Heart left ventricle (tissue), 16 donors: ENCODE measurements at regions of chr10 and their contacts with region 1.

Region 1: DNA sequence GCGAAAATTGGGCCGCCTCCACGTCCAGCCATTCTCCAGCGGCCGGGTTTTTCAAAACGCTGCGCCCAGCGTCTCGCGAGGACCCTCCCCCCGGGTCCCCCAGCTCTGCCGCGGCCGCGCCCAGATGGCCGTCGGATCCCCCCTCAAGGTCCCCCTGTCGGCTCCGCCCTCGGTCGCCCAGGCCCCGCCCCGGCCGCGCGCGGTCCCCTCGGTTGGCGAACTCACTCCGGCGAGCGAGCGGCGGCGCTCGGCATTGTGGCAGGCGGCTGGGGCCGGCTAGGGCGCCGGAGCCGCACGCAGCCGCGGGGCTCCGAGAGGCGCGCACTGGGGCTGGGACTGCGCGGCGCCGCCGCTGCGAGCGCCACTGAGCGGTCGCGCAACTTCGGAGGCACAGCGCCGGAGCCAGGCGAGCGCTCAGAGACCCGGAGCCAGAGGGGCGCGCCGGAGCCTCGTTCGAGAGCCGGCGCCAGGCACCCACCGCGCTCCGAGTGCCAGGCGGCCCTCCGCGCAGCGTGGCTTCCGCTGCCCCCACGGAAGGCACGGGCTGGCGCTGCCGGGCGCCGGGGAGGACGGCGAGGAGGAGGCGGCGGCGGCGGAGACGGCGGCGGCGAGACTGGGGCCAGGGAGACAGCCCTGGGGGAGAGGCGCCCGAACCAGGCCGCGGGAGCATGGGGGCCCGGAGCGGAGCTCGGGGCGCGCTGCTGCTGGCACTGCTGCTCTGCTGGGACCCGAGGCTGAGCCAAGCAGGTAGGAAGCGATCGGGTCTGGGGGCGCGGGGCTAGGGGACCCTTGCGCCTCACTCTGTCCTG is at the start of gene UNC5B:
- DNase-seq: peak; percentile 93 to 96 (median 94)
- ATAC-seq: peak; percentile 72 to 93 (median 86)
- H3K4me3 ChIP-seq: peak within 1 kb of the TSS; percentile 63 to 98 (median 84)
- H3K27ac ChIP-seq: peak within 1 kb of the TSS; percentile 78 to 96 (median 91)
- H3K4me1 ChIP-seq: peaks cover 0 to 59% (median 38%) of the 10 kb centered on the region in 12 donors
- H3K27me3 ChIP-seq: peaks cover 0 to 48% (median 0%) of the 10 kb centered on the region in 9 donors
- CTCF ChIP-seq: peak in 11 of 12 donors; percentile 8 to 64 (median 48)
- POLR2A ChIP-seq: peak; percentile 45 to 95
- total RNA-seq, gene UNC5B: 6.9 to 22.8 (median 10.9) TPM

Region 2: GRCh38 chr10:70903262-70903921 is 309.1 kb before region 1 on chr10:
- intact Hi-C with region 1: loop called in 3 of 10 experiments (anchors 5 to 10 kb)
- DNase-seq: peak in 4 of 5 donors; percentile 68 to 79 (median 70)
- ATAC-seq: peak; percentile 61 to 72 (median 64)
- H3K4me3 ChIP-seq: no peak overlapping the region
- H3K27ac ChIP-seq: no peak overlapping the region
- H3K4me1 ChIP-seq: peaks cover 0 to 24% (median 9%) of the 10 kb centered on the region in 12 donors
- H3K27me3 ChIP-seq: no peaks in the 10 kb centered on the region
- CTCF ChIP-seq: peak; percentile 84 to 95 (median 91)
- POLR2A ChIP-seq: no peak

Region 3: GRCh38 chr10:71009126-71009525 is 203.4 kb before region 1 on chr10:
- intact Hi-C with region 1: loop called in 4 of 10 experiments (anchors 5 to 10 kb)
- DNase-seq: peak in 1 of 5 donors; percentile 35
- ATAC-seq: peak in 1 of 4 donors; percentile 51
- H3K4me3 ChIP-seq: no peak overlapping the region
- H3K27ac ChIP-seq: no peak overlapping the region
- H3K4me1 ChIP-seq: peaks cover 0 to 18% (median 2%) of the 10 kb centered on the region in 12 donors
- H3K27me3 ChIP-seq: peaks cover 0 to 8% (median 0%) of the 10 kb centered on the region in 9 donors
- CTCF ChIP-seq: no peak
- POLR2A ChIP-seq: no peak

Region 4: GRCh38 chr10:71068861-71069271 is 143.7 kb before region 1 on chr10:
- intact Hi-C with region 1: loop called in 3 of 10 experiments (anchors 5 to 10 kb)
- DNase-seq: peak; percentile 65 to 85 (median 83)
- ATAC-seq: peak; percentile 69 to 83 (median 71)
- H3K4me3 ChIP-seq: no peak overlapping the region
- H3K27ac ChIP-seq: peak overlapping the region in 11 of 12 donors; percentile 7 to 84 (median 74)
- H3K4me1 ChIP-seq: peaks cover 0 to 50% (median 15%) of the 10 kb centered on the region in 12 donors
- H3K27me3 ChIP-seq: no peaks in the 10 kb centered on the region
- CTCF ChIP-seq: no peak
- POLR2A ChIP-seq: no peak

Region 5: DNA sequence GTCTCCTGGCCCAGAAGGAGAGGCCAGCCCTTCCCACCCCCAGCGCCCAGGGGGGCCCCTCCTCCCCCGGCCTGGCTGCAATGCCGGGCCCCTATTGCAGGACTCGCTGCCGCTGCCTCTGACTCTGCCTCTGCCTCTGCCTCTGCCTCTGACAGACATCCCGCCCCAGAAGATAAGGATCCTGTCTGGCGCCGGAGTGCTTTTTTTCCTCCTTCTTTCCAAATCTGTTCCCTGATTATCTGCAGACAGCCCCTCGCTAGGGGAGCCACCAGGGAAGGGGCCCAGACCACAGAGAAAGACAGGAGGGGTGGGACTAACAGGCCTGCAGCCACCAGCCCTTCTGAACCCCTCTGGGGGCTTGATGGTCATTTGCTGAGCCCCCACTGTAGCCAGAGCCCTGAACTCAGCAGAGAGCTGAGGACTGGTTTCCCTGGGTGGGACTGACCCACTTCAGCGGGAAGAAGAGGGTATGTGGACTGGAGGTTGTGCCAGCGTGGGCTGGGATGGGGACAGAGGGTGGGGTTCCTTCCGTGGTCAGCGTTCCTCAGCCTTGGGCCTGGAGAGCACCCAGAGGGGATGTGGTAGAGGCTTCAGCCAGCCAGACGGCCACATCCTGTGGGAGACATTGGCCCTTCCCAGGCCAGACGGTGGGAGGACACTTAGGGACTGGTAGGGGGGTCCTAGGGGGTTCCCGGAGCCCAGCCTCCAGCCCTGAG is 22.6 kb after region 1 on chr10:
- intact Hi-C with region 1: loop called in 2 of 10 experiments (anchors 1 kb)
- DNase-seq: peak; percentile 82 to 88 (median 84)
- ATAC-seq: peak; percentile 66 to 77 (median 74)
- H3K4me3 ChIP-seq: peak overlapping the region in 5 of 12 donors; percentile 0 to 27 (median 21)
- H3K27ac ChIP-seq: peak overlapping the region in 11 of 12 donors; percentile 35 to 89 (median 64)
- H3K4me1 ChIP-seq: peaks cover 14 to 100% (median 71%) of the 10 kb centered on the region in 12 donors
- H3K27me3 ChIP-seq: no peaks in the 10 kb centered on the region
- CTCF ChIP-seq: no peak
- POLR2A ChIP-seq: no peak

Region 6: GRCh38 chr10:71260622-71261325 is 48.3 kb after region 1 on chr10:
- intact Hi-C with region 1: loop called in 3 of 10 experiments (anchors 5 kb)
- DNase-seq: peak in 4 of 5 donors; percentile 62 to 83 (median 74)
- ATAC-seq: peak; percentile 42 to 73 (median 60)
- H3K4me3 ChIP-seq: peak overlapping the region in 2 of 12 donors; percentile 6 to 21
- H3K27ac ChIP-seq: peak overlapping the region; percentile 15 to 90 (median 80)
- H3K4me1 ChIP-seq: peaks cover 15 to 98% (median 81%) of the 10 kb centered on the region in 12 donors
- H3K27me3 ChIP-seq: no peaks in the 10 kb centered on the region
- CTCF ChIP-seq: peak in 1 of 12 donors; percentile 7
- POLR2A ChIP-seq: no peak

Region 7: GRCh38 chr10:71285180-71285545 is 72.6 kb after region 1 on chr10:
- intact Hi-C with region 1: loop called in 2 of 10 experiments (anchors 2 to 5 kb)
- DNase-seq: peak in 2 of 5 donors; percentile 45 to 58
- ATAC-seq: peak in 3 of 4 donors; percentile 64 to 71 (median 69)
- H3K4me3 ChIP-seq: no peak overlapping the region
- H3K27ac ChIP-seq: no peak overlapping the region
- H3K4me1 ChIP-seq: peaks cover 0 to 9% (median 3%) of the 10 kb centered on the region in 12 donors
- H3K27me3 ChIP-seq: no peaks in the 10 kb centered on the region
- CTCF ChIP-seq: peak; percentile 56 to 85 (median 76)
- POLR2A ChIP-seq: no peak

Region 8: GRCh38 chr10:71623098-71623985 is 410.8 kb after region 1 on chr10:
- intact Hi-C with region 1: no loop called
- DNase-seq: no peak
- ATAC-seq: peak in 3 of 4 donors; percentile 25 to 62 (median 53)
- H3K4me3 ChIP-seq: no peak overlapping the region
- H3K27ac ChIP-seq: no peak overlapping the region
- H3K4me1 ChIP-seq: peaks cover 0 to 34% (median 19%) of the 10 kb centered on the region in 12 donors
- H3K27me3 ChIP-seq: no peaks in the 10 kb centered on the region
- CTCF ChIP-seq: peak in 6 of 12 donors; percentile 13 to 39 (median 26)
- POLR2A ChIP-seq: no peak